Psoas muscle (tissue), 8 donors: ENCODE measurements at regions of chr17 and their contacts with region 1.

Region 1: GRCh38 chr17:45190503-45191255 is 29.0 kb downstream of the HEXIM2 start:
- DNase-seq: no peak
- ATAC-seq: no peak
- H3K4me3 ChIP-seq: no peak overlapping the region
- H3K27ac ChIP-seq: no peak overlapping the region
- H3K4me1 ChIP-seq: no peaks in the 10 kb centered on the region
- H3K27me3 ChIP-seq: no peaks in the 10 kb centered on the region
- CTCF ChIP-seq: no peak

Region 2: DNA sequence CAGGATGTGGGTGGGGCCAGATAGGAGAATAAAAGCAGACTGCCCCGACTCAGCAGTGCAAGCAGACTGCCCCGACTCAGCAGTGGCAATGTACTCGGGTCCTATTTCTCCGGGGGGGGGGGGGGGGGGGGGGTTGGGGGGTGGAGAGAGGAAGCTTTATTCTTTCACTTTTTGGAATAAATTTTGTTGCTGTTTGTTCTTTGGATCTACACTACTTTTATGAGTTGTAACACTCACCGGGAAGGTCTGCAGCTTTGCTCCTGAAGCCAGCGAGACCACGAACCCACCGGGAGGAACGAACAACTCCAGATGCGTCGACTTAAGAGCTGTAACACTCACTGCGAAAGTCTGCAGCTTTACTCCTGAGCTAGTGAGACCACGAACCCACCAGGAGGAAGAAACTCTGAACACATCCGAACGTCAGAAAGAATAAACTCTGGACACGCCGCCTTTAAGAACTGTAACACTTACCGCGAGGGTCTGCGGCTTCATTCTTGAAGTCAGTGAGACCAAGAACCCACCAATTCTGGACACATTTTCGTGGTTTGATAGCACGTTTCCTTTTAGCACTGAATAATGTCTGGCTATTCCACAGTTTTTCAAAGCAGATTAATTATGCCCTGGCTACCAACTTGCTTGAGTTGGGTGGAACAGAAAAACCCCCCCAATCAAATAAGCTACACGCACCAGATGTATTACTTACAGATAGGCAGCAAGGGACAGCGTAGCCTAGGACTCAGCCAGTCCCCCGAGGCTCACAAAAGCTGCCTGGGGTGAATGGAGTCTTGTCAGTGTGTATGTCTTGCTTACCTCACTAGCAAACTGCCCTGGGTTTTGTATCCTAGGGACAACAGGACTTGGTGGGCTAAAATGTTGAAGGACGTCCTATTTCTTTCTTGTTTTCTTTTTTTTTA is 621.5 kb before region 1 on chr17:
- intact Hi-C with region 1: no loop called
- DNase-seq: no peak
- ATAC-seq: no peak
- H3K4me3 ChIP-seq: no peak overlapping the region
- H3K27ac ChIP-seq: no peak overlapping the region
- H3K4me1 ChIP-seq: no peaks in the 10 kb centered on the region
- H3K27me3 ChIP-seq: peaks cover 0 to 11% (median 4%) of the 10 kb centered on the region in 3 donors
- CTCF ChIP-seq: no peak

Region 3: DNA sequence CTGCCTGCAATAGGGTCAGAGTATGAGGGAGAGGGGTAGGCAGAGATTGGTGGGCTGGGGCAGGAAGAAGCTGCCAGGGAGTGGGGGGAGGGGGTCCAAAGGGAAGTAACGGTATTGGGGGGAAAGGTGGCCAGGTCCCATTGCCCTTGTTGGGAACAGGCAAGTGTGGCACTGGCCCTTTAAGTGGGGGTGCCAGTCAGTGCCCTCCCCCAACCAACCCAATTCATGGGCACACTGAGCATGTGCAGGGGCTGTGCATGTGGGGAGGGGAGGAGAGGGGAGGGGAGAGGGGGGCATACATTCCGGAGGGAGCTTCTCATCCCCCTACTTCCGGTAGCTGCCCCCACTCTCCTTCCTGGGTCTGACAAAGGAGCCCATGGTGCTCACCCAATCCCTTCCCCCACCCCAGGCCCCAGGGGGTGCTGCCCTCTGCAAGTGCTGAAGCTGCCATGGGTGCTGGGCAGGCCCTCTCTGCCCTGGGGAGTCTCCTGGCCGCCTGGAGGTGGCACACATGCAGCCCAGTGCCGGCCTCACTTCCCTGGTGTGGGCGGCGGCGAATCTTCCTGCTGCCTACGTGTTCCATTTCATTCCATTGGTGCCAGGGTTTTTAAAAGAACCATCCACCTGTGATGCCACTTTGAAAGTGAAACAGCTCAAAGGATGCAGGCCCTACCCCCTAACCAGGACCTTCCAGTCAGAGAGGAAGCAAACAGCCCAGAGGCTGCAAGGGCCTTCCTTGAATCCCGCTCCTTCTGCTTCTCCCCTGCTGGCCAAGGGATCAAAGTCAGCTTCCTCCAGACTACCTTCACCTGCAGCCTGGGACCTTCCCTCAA is 18.0 kb before region 1 on chr17:
- intact Hi-C with region 1: loop called in 1 of 2 experiments (anchors 2 kb)
- DNase-seq: peak; percentile 70 to 88
- ATAC-seq: peak; percentile 70 to 89 (median 84)
- H3K4me3 ChIP-seq: peak overlapping the region; percentile 44
- H3K27ac ChIP-seq: peak overlapping the region; percentile 82
- H3K4me1 ChIP-seq: peaks cover 25% of the 10 kb centered on the region
- H3K27me3 ChIP-seq: no peaks in the 10 kb centered on the region
- CTCF ChIP-seq: no peak